ENCODE measurements at regions of chr19 and their contacts with region 1.

Region 1: GRCh38 chr19:48582168-48582567 is 24.4 kb upstream of the SPACA4 start:
- DNase-seq: no peak
- ATAC-seq: no peak

Region 2: GRCh38 chr19:48351341-48351752 is 230.8 kb before region 1 on chr19:
- intact Hi-C with region 1: loop called in 1 of 2 experiments (anchors 5 kb)
- DNase-seq: peak; percentile 73
- ATAC-seq: peak; percentile 50 to 82

Region 3: GRCh38 chr19:48489608-48490216 is 92.5 kb before region 1 on chr19:
- intact Hi-C with region 1: loop called (anchors 5 kb)
- DNase-seq: peak; percentile 76
- ATAC-seq: no peak

Region 4: DNA sequence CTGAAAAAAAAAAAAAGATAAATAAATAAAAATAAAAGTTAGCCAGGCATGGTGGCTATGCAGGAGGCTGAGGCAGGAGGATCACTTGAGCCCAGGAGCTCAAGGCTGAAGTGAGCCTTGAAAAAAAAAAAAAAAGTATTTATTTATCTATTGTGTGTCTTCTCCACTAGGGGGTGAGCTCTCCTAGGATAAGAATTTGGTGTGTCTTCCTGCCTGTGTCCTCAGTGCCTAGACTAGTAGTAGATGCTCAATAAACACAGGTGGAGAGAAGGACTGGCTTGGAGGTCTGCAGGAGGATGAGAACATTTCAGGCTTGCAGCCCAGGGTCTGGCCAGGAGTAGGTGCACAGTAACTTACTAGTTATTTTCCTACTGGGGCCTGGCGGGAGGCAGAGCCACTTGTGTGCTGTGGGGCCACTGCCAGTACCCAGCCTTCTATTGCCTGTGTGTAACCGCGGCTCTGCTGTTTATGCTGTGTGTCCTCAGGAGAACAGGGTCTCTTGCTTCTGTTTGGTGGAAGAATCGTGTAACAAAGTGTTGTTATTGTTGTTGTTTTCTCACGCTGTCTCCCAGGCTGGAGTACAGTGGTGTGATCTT is 75.9 kb before region 1 on chr19:
- intact Hi-C with region 1: loop called in 1 of 2 experiments (anchors 5 kb)
- DNase-seq: no peak
- ATAC-seq: no peak

Region 5: GRCh38 chr19:48795055-48795684 is 213.0 kb after region 1 on chr19:
- intact Hi-C with region 1: no loop called
- DNase-seq: peak; percentile 94
- ATAC-seq: peak; percentile 98 to 99

Measured in left cardiac atrium (tissue), 4 donors.